Naive thymus-derived CD4-positive, alpha-beta T cell (primary cell): ENCODE measurements at regions of chr15 and their contacts with region 1.

Region 1: DNA sequence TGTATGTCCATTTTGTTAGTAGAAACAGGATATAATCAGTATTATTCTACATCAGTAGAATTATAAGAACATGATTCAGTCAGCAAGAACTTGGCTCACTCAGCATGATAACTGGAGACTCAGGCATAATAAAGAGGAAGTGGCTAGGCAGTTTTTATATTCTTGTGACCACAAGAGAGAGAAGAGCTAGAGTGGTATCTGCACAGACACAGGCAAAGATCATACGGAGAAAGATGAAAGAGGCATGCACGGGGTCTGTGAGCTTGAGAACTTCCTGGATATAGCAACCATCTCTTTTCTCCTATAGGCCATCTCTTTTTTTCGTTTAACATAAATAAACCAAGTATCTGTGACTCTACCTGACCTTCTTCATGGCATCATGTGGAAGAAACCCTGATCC is 46.8 kb downstream of the MYO5A start:
- DNase-seq: peak in 7 of 9 donors; percentile 75 to 91 (median 87)
- ATAC-seq: peak; percentile 99
- H3K4me3 ChIP-seq: peak overlapping the region; percentile 36
- H3K4me3 Mint-ChIP-seq: peak overlapping the region; percentile 8 to 78 (median 58)
- H3K27ac ChIP-seq: no peak overlapping the region
- H3K27ac Mint-ChIP-seq: peak overlapping the region; percentile 15 to 88 (median 53)
- H3K4me1 ChIP-seq: peaks cover 30 to 43% of the 10 kb centered on the region in 2 donors
- H3K4me1 Mint-ChIP-seq: peaks cover 56 to 71% (median 59%) of the 10 kb centered on the region in 7 donors
- H3K27me3 ChIP-seq: no peaks in the 10 kb centered on the region
- H3K27me3 Mint-ChIP-seq: no peaks in the 10 kb centered on the region

Region 2: GRCh38 chr15:52408823-52409222 is 73.1 kb before region 1 on chr15:
- CTCF ChIA-PET with region 1: no interaction called
- POLR2A ChIA-PET with region 1: no interaction called
- intact Hi-C with region 1: loop called in 1 of 2 experiments (anchors 5 kb)
- DNase-seq: no peak
- ATAC-seq: no peak
- H3K4me3 ChIP-seq: no peak overlapping the region
- H3K4me3 Mint-ChIP-seq: no peak overlapping the region
- H3K27ac ChIP-seq: no peak overlapping the region
- H3K27ac Mint-ChIP-seq: no peak overlapping the region
- H3K4me1 ChIP-seq: no peaks in the 10 kb centered on the region
- H3K4me1 Mint-ChIP-seq: no peaks in the 10 kb centered on the region
- H3K27me3 ChIP-seq: no peaks in the 10 kb centered on the region
- H3K27me3 Mint-ChIP-seq: no peaks in the 10 kb centered on the region

Region 3: DNA sequence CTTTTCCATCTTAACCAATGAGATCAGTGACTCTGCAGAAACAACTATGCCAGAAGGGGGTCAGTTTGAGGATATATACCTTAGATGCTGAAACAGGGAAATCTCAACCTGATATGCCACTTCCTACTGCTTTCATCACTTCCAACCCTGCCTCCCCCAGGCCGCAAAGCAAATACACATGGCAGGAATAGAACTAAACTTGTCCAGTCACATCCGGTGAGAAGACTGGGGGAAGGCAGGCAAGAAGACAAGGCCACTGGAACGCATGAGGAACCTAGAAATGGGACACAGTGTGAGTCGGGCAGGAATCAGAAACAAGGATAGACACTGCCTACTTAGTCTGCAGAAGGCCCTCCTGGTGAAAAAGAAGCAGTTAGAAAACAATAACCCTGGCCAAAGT is 43.9 kb before region 1 on chr15:
- CTCF ChIA-PET with region 1: no interaction called
- POLR2A ChIA-PET with region 1: interaction called, 3 read pairs
- intact Hi-C with region 1: loop called in 1 of 2 experiments (anchors 10 kb)
- DNase-seq: no peak
- ATAC-seq: peak; percentile 64
- H3K4me3 ChIP-seq: no peak overlapping the region
- H3K4me3 Mint-ChIP-seq: no peak overlapping the region
- H3K27ac ChIP-seq: no peak overlapping the region
- H3K27ac Mint-ChIP-seq: peak overlapping the region in 2 of 9 donors; percentile 34 to 38
- H3K4me1 ChIP-seq: no peaks in the 10 kb centered on the region
- H3K4me1 Mint-ChIP-seq: peaks cover 11 to 47% (median 27%) of the 10 kb centered on the region in 7 donors
- H3K27me3 ChIP-seq: no peaks in the 10 kb centered on the region
- H3K27me3 Mint-ChIP-seq: no peaks in the 10 kb centered on the region

Region 4: DNA sequence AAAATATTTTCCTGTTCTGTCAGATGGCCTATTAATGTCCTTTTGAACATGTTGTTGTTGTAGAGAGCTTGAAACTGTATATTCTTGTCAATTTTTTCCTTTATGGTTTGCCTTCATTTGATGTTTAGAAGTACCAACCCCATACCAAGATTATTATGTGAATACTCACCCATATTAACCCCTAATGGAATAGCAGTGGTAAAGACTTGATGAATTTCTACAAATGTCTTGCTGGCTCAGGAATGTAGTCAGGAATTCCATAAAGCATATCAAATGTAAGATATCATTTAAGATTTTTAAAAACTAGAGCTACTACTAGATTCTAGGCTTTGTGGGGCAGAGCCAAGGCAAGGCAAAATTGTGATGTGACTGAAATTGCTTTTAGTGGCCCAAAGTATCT is 16.8 kb after region 1 on chr15:
- CTCF ChIA-PET with region 1: no interaction called
- POLR2A ChIA-PET with region 1: interaction called, 4 read pairs
- intact Hi-C with region 1: loop called in 1 of 2 experiments (anchors 2 kb)
- DNase-seq: no peak
- ATAC-seq: no peak
- H3K4me3 ChIP-seq: no peak overlapping the region
- H3K4me3 Mint-ChIP-seq: no peak overlapping the region
- H3K27ac ChIP-seq: no peak overlapping the region
- H3K27ac Mint-ChIP-seq: peak overlapping the region in 1 of 9 donors; percentile 12
- H3K4me1 ChIP-seq: no peaks in the 10 kb centered on the region
- H3K4me1 Mint-ChIP-seq: peaks cover 12 to 36% (median 17%) of the 10 kb centered on the region in 7 donors
- H3K27me3 ChIP-seq: no peaks in the 10 kb centered on the region
- H3K27me3 Mint-ChIP-seq: no peaks in the 10 kb centered on the region

Region 5: DNA sequence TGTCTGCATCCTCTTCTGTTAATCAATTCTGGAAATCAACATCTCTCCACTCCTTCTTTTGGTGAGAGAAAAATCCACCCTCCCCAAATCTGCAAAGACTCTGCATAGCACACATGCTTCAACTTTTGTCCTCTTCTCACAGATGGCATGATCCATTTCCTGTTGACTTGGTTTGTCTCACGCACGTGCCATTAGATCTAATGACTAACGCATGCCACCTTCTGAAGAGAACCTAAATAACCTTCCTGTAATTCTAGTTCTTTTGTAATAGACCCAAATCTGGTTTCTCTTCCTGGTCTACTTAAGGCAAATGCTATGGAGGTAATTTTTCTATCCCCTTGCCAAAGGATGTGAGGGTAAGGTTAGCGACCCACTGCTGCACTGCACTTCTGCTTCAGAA is 248.3 kb after region 1 on chr15:
- CTCF ChIA-PET with region 1: no interaction called
- POLR2A ChIA-PET with region 1: no interaction called
- intact Hi-C with region 1: loop called (anchors 5 to 10 kb)
- DNase-seq: peak in 7 of 9 donors; percentile 53 to 82 (median 75)
- ATAC-seq: peak; percentile 96
- H3K4me3 ChIP-seq: no peak overlapping the region
- H3K4me3 Mint-ChIP-seq: peak overlapping the region; percentile 10 to 69 (median 50)
- H3K27ac ChIP-seq: no peak overlapping the region
- H3K27ac Mint-ChIP-seq: peak overlapping the region; percentile 56 to 94 (median 87)
- H3K4me1 ChIP-seq: peaks cover 11 to 15% of the 10 kb centered on the region in 2 donors
- H3K4me1 Mint-ChIP-seq: peaks cover 6 to 31% (median 20%) of the 10 kb centered on the region in 7 donors
- H3K27me3 ChIP-seq: no peaks in the 10 kb centered on the region
- H3K27me3 Mint-ChIP-seq: no peaks in the 10 kb centered on the region

Region 6: GRCh38 chr15:52735231-52736089 is 253.5 kb after region 1 on chr15:
- CTCF ChIA-PET with region 1: no interaction called
- POLR2A ChIA-PET with region 1: no interaction called
- intact Hi-C with region 1: loop called (anchors 5 to 10 kb)
- DNase-seq: peak; percentile 22 to 83 (median 73)
- ATAC-seq: peak; percentile 90
- H3K4me3 ChIP-seq: no peak overlapping the region
- H3K4me3 Mint-ChIP-seq: no peak overlapping the region
- H3K27ac ChIP-seq: no peak overlapping the region
- H3K27ac Mint-ChIP-seq: peak overlapping the region in 3 of 9 donors; percentile 2 to 75 (median 55)
- H3K4me1 ChIP-seq: peaks cover under 1 to 4% of the 10 kb centered on the region in 2 donors
- H3K4me1 Mint-ChIP-seq: peaks cover 0 to 25% (median 7%) of the 10 kb centered on the region in 7 donors
- H3K27me3 ChIP-seq: no peaks in the 10 kb centered on the region
- H3K27me3 Mint-ChIP-seq: peaks cover 0 to 12% (median 3%) of the 10 kb centered on the region in 5 donors